Sciatic nerve (tissue), 2 donors: ENCODE measurements at regions of chr15 and their contacts with region 1.

Region 1: GRCh38 chr15:85155360-85155759 is 173.7 kb downstream of the PDE8A start:
- DNase-seq: no peak
- ATAC-seq: no peak

Region 2: GRCh38 chr15:85010386-85011159 is 144.8 kb before region 1 on chr15:
- intact Hi-C with region 1: loop called (anchors 5 kb)
- DNase-seq: no peak
- ATAC-seq: peak; percentile 57